K562 (cell line): ENCODE measurements at regions of chr2 and their contacts with region 1.

Region 1: DNA sequence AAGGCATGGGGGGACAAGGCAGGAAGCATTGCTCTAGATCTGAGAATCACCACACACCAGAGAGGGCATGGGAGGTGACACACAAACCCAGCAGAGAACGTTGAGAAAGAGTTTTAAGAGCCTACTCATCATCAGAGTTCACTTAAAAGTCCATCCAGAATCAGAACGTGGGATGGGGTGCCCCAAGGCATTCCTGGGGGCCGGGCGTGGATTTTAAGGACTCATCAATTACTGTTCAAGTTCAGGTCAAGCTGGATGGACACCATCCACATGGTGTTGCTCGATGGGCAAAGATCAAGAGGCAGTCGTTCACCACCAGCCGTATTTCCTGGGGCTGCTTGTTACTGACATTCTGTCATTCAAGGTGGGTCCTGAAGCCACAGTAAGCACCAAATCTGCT is 34.9 kb downstream of the BCL11A start:
- DNase-seq: no peak
- ATAC-seq: no peak
- H3K4me3 ChIP-seq: no peak overlapping the region
- H3K27ac ChIP-seq: no peak overlapping the region
- H3K4me1 ChIP-seq: no peaks in the 10 kb centered on the region
- H3K27me3 ChIP-seq: peaks cover 0 to 14% of the 10 kb centered on the region in 2 experiments; a peak in 2 of 5 replicates
- CTCF ChIP-seq: no peak
- EP300 ChIP-seq: no peak
- POLR2A ChIP-seq: no peak
- RAD21 ChIP-seq: no peak

Region 2: DNA sequence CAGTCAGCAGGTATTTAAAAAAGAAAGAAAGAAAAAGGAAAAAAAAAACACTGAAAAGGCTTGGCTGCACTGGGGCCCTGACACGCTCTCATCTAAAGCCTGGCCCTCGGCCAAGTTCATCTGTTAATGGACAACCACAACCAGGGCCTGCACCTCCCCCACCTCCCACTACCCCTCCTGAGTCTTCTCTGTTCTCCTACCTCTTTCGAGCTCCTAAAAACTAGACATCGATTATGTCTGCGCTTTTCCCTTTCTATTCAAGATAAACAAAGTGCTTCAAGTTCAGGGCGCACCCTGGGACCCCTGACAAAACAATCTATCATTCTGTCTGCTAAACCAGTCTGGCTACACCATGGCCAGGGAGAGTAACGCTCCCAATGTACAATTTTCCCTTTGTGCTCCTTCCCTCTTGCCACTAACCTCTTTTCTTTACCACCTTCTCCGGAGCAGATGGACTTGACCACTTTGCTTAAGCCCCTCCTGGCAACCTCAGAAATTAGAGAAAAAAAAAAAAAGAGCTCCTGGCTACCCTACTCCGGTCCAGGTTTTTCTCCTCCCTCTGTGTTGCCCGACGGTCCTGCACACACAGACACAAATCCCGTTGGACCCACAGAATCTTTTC is 12.2 kb after region 1 on chr2:
- CTCF ChIA-PET with region 1: no interaction called
- POLR2A ChIA-PET with region 1: interaction called, 10 read pairs
- in situ Hi-C with region 1: no loop called
- intact Hi-C with region 1: no loop called
- DNase-seq: peak; percentile 34 to 64 (median 52)
- ATAC-seq: peak; percentile 83
- H3K4me3 ChIP-seq: no peak overlapping the region
- H3K27ac ChIP-seq: no peak overlapping the region
- H3K4me1 ChIP-seq: no peaks in the 10 kb centered on the region
- H3K27me3 ChIP-seq: peaks cover 6 to 34% of the 10 kb centered on the region in 2 experiments; a peak in 3 of 5 replicates
- CTCF ChIP-seq: no peak
- EP300 ChIP-seq: no peak
- POLR2A ChIP-seq: no peak
- RAD21 ChIP-seq: no peak